Activated B cell treated with CpG ODN at 0.5 μM for 24 hours (primary cell): ENCODE measurements at regions of chr1 and their contacts with region 1.

Region 1: DNA sequence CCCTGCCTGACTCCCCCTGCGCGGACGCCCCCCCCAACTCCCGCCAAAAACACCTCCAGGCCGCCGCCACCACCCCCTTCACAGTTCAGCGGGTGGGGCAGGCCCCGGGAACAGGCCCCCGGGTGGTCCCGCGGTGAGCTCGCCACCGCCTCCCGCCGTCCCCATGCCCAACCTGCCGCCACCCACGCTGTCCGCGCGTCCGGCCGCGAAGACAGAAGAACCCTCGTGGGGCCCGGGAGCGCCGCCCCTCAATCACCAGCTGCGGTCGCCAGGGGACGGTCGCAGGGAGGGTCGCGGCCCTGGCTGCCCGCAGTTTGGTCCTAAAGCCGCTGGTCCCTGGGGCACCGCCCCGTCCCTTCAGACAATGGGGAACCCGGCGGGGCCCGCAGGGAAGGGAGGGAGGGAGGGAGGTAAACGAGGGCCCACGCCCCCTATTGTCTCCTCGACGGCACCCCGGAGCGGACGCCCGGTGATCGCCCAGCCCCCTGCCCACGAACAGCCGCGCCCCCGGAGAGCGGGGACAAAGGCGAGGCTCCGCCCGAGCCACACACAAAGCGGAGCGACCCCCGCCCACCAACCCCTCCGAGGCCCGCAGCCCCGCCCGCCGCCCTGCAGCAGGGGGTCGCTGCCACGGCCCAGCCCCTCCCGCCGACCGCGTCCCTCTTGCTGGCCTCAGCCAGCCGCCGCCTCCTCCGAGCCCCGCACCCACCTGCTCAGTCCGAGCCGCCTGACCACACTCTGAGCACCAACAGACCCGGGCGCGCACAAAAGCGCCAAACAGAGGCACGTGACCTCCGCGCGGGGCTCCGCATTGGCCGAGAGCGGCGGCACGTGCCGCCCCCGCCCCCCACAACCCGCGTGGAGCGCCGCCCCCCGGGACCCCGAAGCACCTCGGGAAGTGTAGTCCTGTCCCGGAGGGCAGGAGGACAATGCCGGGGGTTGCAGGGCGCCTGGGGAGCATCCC is at the start of gene STMN1:
- DNase-seq: peak; percentile 76
- ATAC-seq: peak; percentile 77
- H3K4me3 Mint-ChIP-seq: peak within 1 kb of the TSS; percentile 90
- H3K27ac Mint-ChIP-seq: peak within 1 kb of the TSS; percentile 76
- H3K4me1 Mint-ChIP-seq: peaks cover 15% of the 10 kb centered on the region
- H3K27me3 Mint-ChIP-seq: no peaks in the 10 kb centered on the region
- CTCF ChIP-seq: no peak
- total RNA-seq, gene STMN1: 24.8 and 25.6 TPM in 2 replicates

Region 2: GRCh38 chr1:25616095-25616986 is 289.6 kb before region 1 on chr1 and contains the start of gene MAN1C1:
- CTCF ChIA-PET with region 1: no interaction called
- POLR2A ChIA-PET with region 1: no interaction called
- intact Hi-C with region 1: no loop called
- DNase-seq: peak; percentile 88
- ATAC-seq: peak; percentile 93
- H3K4me3 Mint-ChIP-seq: peak within 1 kb of the TSS; percentile 69
- H3K27ac Mint-ChIP-seq: no peak within 1 kb of the TSS
- H3K4me1 Mint-ChIP-seq: peaks cover 25% of the 10 kb centered on the region
- H3K27me3 Mint-ChIP-seq: peaks cover 34% of the 10 kb centered on the region
- CTCF ChIP-seq: no peak
- total RNA-seq, gene MAN1C1: 0.20 and 0.34 TPM in 2 replicates

Region 3: GRCh38 chr1:25858906-25859789 is 46.8 kb before region 1 on chr1 and contains the start of gene AUNIP:
- CTCF ChIA-PET with region 1: no interaction called
- POLR2A ChIA-PET with region 1: no interaction called
- intact Hi-C with region 1: loop called (anchors 1 kb)
- DNase-seq: peak; percentile 90
- ATAC-seq: peak; percentile 99
- H3K4me3 Mint-ChIP-seq: peak within 1 kb of the TSS; percentile 91
- H3K27ac Mint-ChIP-seq: peak within 1 kb of the TSS; percentile 94
- H3K4me1 Mint-ChIP-seq: peaks cover 28% of the 10 kb centered on the region
- H3K27me3 Mint-ChIP-seq: no peaks in the 10 kb centered on the region
- CTCF ChIP-seq: no peak
- total RNA-seq, gene AUNIP: 0.42 and 0.64 TPM in 2 replicates

Region 4: DNA sequence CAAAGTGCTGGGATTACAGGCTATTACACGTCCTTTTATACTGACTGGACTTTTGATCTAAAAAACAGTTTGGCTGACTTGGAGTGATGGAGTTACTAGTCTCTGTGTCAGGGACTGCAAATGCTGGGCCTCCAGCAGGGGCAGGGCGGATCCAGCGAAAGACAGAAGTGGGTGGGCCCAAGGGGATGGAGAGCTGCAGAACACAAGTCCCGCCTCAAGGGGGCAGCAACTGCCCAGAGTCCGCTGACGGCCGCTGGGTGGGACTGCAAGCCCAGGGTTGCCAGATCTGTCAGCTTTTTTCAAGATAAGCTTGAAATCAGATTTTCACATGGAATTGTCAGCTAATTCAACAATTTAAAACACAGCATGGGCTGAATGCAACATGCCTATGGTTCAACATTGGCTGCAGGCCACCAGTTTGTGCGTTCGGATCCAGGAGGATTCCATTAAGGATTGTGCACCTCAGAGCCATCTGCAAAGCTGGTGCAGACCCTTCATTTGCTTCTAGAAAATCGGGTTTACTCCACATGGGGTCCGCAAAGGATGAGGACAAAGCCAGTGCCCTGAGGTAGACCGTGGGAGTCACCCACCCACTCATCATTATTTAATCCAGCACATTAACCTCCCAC is 10.5 kb before region 1 on chr1:
- CTCF ChIA-PET with region 1: interaction called, 22 read pairs
- POLR2A ChIA-PET with region 1: interaction called, 8 read pairs
- intact Hi-C with region 1: loop called (anchors 1 kb)
- DNase-seq: peak; percentile 80
- ATAC-seq: peak; percentile 100
- H3K4me3 Mint-ChIP-seq: peak overlapping the region; percentile 3
- H3K27ac Mint-ChIP-seq: peak overlapping the region; percentile 22
- H3K4me1 Mint-ChIP-seq: peaks cover 7% of the 10 kb centered on the region
- H3K27me3 Mint-ChIP-seq: no peaks in the 10 kb centered on the region
- CTCF ChIP-seq: peak; percentile 74

Region 5: GRCh38 chr1:26035959-26036755 is 130.2 kb after region 1 on chr1:
- CTCF ChIA-PET with region 1: no interaction called
- POLR2A ChIA-PET with region 1: no interaction called
- intact Hi-C with region 1: loop called (anchors 2 kb)
- DNase-seq: peak; percentile 84
- ATAC-seq: peak; percentile 73
- H3K4me3 Mint-ChIP-seq: peak overlapping the region; percentile 96
- H3K27ac Mint-ChIP-seq: peak overlapping the region; percentile 78
- H3K4me1 Mint-ChIP-seq: peaks cover 11% of the 10 kb centered on the region
- H3K27me3 Mint-ChIP-seq: peaks cover 6% of the 10 kb centered on the region
- CTCF ChIP-seq: peak; percentile 98

Region 6: DNA sequence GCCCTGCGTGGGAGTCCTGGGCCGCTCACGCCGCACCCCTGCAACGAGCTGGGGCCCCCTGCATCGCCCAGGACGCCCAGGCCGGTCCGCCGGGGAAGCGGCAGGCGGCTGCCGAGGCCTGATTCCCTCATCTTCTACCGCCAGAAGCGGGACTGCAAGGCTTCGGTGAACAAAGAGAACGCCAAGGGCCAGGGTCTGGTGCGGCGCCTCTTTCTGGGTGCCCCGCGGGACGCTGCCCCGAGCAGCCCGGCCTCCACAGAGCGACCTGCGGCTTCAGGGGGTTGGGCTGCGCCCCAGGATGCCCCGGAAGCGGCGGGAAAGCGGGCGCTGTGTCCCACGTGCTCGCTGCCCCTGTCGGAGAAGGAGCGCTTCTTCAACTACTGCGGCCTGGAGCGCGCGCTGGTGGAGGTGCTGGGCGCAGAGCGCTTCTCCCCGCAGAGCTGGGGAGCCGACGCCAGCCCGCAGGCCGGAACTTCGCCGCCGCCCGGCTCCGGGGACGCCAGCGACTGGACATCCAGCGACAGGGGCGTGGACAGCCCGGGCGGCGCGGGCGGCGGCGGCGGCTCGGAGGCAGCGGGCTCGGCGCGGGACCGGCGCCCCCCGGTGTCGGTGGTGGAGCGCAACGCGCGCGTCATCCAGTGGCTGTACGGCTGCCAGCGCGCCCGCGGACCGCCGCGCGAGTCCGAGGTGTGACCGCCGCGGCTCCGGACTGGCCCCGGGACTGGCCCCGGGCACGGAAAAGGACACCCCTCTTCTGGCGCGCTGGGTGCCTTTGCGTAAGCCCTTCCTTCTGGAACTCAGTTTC is 255.7 kb after region 1 on chr1:
- CTCF ChIA-PET with region 1: no interaction called
- POLR2A ChIA-PET with region 1: no interaction called
- intact Hi-C with region 1: loop called (anchors 5 kb)
- DNase-seq: peak; percentile 54
- ATAC-seq: peak; percentile 64
- H3K4me3 Mint-ChIP-seq: peak overlapping the region; percentile 59
- H3K27ac Mint-ChIP-seq: no peak overlapping the region
- H3K4me1 Mint-ChIP-seq: peaks cover 13% of the 10 kb centered on the region
- H3K27me3 Mint-ChIP-seq: peaks cover 26% of the 10 kb centered on the region
- CTCF ChIP-seq: no peak